ENCODE measurements at regions of chr19 and their contacts with region 1.

Region 1: GRCh38 chr19:36114763-36115452 is at the start of gene POLR2I:
- DNase-seq: peak; percentile 96 to 99
- ATAC-seq: peak; percentile 78 to 92 (median 84)
- H3K4me3 ChIP-seq: peak within 1 kb of the TSS; percentile 78
- H3K4me3 Mint-ChIP-seq: peak within 1 kb of the TSS; percentile 90
- H3K27ac ChIP-seq: peak within 1 kb of the TSS; percentile 93
- H3K27ac Mint-ChIP-seq: peak within 1 kb of the TSS; percentile 95 to 99
- H3K4me1 ChIP-seq: peaks cover 29% of the 10 kb centered on the region
- H3K4me1 Mint-ChIP-seq: peaks cover 33 to 53% of the 10 kb centered on the region in 2 donors
- H3K27me3 ChIP-seq: no peaks in the 10 kb centered on the region
- H3K27me3 Mint-ChIP-seq: no peaks in the 10 kb centered on the region
- CTCF ChIP-seq: no peak
- total RNA-seq, gene POLR2I: 26.6 to 33.4 (median 31.8) TPM

Region 2: GRCh38 chr19:35748106-35749020 is 366.5 kb before region 1 on chr19 and contains the start of gene LIN37:
- intact Hi-C with region 1: loop called (anchors 5 kb)
- DNase-seq: peak; percentile 97 to 99
- ATAC-seq: peak; percentile 73 to 90 (median 77)
- H3K4me3 ChIP-seq: peak within 1 kb of the TSS; percentile 91
- H3K4me3 Mint-ChIP-seq: peak within 1 kb of the TSS; percentile 97
- H3K27ac ChIP-seq: peak within 1 kb of the TSS; percentile 84
- H3K27ac Mint-ChIP-seq: peak within 1 kb of the TSS; percentile 92
- H3K4me1 ChIP-seq: peaks cover 46% of the 10 kb centered on the region
- H3K4me1 Mint-ChIP-seq: peaks cover 33 to 47% of the 10 kb centered on the region in 2 donors
- H3K27me3 ChIP-seq: no peaks in the 10 kb centered on the region
- H3K27me3 Mint-ChIP-seq: no peaks in the 10 kb centered on the region
- CTCF ChIP-seq: no peak
- total RNA-seq, gene LIN37: 16.7 to 22.1 (median 18.2) TPM

Region 3: GRCh38 chr19:35995048-35995993 is 119.6 kb before region 1 on chr19 and contains the start of gene SDHAF1:
- intact Hi-C with region 1: loop called (anchors 10 kb)
- DNase-seq: peak; percentile 88 to 95
- ATAC-seq: peak; percentile 89 to 94 (median 91)
- H3K4me3 ChIP-seq: peak within 1 kb of the TSS; percentile 59
- H3K4me3 Mint-ChIP-seq: peak within 1 kb of the TSS; percentile 96
- H3K27ac ChIP-seq: peak within 1 kb of the TSS; percentile 83
- H3K27ac Mint-ChIP-seq: peak within 1 kb of the TSS; percentile 91 to 95
- H3K4me1 ChIP-seq: peaks cover 26% of the 10 kb centered on the region
- H3K4me1 Mint-ChIP-seq: peaks cover 12 to 30% of the 10 kb centered on the region in 2 donors
- H3K27me3 ChIP-seq: no peaks in the 10 kb centered on the region
- H3K27me3 Mint-ChIP-seq: no peaks in the 10 kb centered on the region
- CTCF ChIP-seq: no peak
- total RNA-seq, gene SDHAF1: 9.2 to 12.1 (median 10.5) TPM

Region 4: DNA sequence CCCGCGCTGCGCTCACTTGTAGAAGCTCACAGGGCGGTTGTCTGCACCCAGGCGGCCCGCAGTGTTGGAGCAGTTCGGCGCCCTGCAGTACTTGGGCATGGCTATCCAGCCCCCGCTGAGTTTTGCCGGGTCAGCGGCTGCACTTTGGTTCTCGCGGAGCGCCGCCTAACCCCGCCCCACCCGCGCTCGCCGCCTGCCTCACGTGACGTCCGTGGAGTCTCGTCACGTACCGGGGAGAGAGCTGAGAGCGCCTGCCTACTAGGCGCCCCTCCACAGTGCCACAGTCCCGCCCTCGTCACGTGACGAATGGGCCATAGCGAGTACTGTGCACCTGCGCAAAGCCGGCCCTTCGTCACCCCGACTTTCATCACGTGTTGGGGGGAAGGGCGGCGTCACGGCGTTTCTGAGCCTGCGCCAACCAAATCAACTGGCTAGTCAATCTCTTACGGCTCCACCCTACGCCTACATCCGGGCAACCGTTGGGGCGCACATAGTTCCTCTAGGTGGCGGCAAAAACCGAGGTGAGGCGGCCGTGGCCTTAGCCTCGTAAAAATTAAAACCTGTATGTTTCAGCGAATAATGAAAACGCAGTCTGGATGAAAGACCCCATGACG is 60.7 kb before region 1 on chr19 and contains the start of gene THAP8:
- intact Hi-C with region 1: loop called (anchors 1 kb)
- DNase-seq: peak; percentile 99 to 100
- ATAC-seq: peak; percentile 83 to 94 (median 84)
- H3K4me3 ChIP-seq: peak within 1 kb of the TSS; percentile 85
- H3K4me3 Mint-ChIP-seq: peak within 1 kb of the TSS; percentile 98
- H3K27ac ChIP-seq: peak within 1 kb of the TSS; percentile 90
- H3K27ac Mint-ChIP-seq: peak within 1 kb of the TSS; percentile 93 to 94
- H3K4me1 ChIP-seq: peaks cover 18% of the 10 kb centered on the region
- H3K4me1 Mint-ChIP-seq: peaks cover 26 to 29% of the 10 kb centered on the region in 2 donors
- H3K27me3 ChIP-seq: no peaks in the 10 kb centered on the region
- H3K27me3 Mint-ChIP-seq: no peaks in the 10 kb centered on the region
- CTCF ChIP-seq: peak; percentile 66
- total RNA-seq, gene THAP8: 1.8 to 3.2 (median 2.8) TPM

Region 5: GRCh38 chr19:36132489-36132891 is 17.6 kb after region 1 on chr19:
- intact Hi-C with region 1: loop called (anchors 1 kb)
- DNase-seq: peak; percentile 33 to 47
- ATAC-seq: peak; percentile 38 to 65 (median 50)
- H3K4me3 ChIP-seq: no peak overlapping the region
- H3K4me3 Mint-ChIP-seq: peak overlapping the region; percentile 50
- H3K27ac ChIP-seq: peak overlapping the region; percentile 41
- H3K27ac Mint-ChIP-seq: peak overlapping the region; percentile 82 to 88
- H3K4me1 ChIP-seq: peaks cover 44% of the 10 kb centered on the region
- H3K4me1 Mint-ChIP-seq: peaks cover 26 to 43% of the 10 kb centered on the region in 2 donors
- H3K27me3 ChIP-seq: no peaks in the 10 kb centered on the region
- H3K27me3 Mint-ChIP-seq: no peaks in the 10 kb centered on the region
- CTCF ChIP-seq: no peak

Region 6: DNA sequence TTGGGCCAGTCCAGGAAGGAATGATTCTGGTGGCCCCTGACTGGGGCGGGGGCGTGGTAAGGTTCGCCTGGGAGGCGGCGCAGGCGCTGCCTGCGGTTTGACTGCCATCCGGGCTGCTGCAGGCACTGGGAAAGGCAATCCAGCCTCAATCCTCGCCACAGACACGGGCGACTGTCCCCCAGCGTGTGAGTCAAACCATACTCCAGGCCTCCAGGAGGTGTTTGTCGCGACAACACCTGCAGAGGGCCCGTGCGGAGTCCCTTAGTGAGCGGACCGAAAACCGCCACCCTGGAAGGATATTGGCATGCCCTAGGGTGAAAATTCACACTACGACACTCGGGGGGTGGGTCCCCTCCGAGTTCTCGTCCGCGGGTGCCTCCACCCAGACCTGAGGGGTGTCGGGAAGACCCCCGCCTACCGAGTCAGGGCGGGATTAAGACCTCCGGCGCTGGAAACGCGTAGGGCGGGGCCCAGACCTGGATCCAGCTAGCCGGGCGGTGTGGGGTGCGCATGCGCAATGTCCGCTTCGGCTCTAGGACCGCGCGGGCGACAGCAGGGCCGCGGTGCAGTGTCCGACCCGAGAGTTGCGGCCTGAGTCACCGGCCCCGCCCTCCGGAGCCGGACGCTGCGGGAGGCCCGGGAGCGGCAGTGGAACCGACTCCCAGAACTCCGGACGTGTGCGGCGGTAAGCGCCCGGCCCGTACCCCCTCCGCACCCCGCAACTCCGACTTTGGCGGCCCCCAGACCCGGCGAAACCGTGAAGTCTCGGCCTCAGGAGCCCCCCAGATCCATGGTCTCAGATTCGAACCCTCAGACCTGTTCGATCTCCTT is 24.8 kb after region 1 on chr19 and contains the start of gene CAPNS1:
- intact Hi-C with region 1: loop called (anchors 1 kb)
- DNase-seq: peak; percentile 91 to 96
- ATAC-seq: peak; percentile 68 to 88 (median 78)
- H3K4me3 ChIP-seq: peak within 1 kb of the TSS; percentile 94
- H3K4me3 Mint-ChIP-seq: peak within 1 kb of the TSS; percentile 96
- H3K27ac ChIP-seq: peak within 1 kb of the TSS; percentile 76
- H3K27ac Mint-ChIP-seq: peak within 1 kb of the TSS; percentile 88 to 90
- H3K4me1 ChIP-seq: peaks cover 19% of the 10 kb centered on the region
- H3K4me1 Mint-ChIP-seq: peaks cover 17 to 29% of the 10 kb centered on the region in 2 donors
- H3K27me3 ChIP-seq: no peaks in the 10 kb centered on the region
- H3K27me3 Mint-ChIP-seq: no peaks in the 10 kb centered on the region
- CTCF ChIP-seq: no peak
- total RNA-seq, gene CAPNS1: 569 to 637 (median 578) TPM

Region 7: DNA sequence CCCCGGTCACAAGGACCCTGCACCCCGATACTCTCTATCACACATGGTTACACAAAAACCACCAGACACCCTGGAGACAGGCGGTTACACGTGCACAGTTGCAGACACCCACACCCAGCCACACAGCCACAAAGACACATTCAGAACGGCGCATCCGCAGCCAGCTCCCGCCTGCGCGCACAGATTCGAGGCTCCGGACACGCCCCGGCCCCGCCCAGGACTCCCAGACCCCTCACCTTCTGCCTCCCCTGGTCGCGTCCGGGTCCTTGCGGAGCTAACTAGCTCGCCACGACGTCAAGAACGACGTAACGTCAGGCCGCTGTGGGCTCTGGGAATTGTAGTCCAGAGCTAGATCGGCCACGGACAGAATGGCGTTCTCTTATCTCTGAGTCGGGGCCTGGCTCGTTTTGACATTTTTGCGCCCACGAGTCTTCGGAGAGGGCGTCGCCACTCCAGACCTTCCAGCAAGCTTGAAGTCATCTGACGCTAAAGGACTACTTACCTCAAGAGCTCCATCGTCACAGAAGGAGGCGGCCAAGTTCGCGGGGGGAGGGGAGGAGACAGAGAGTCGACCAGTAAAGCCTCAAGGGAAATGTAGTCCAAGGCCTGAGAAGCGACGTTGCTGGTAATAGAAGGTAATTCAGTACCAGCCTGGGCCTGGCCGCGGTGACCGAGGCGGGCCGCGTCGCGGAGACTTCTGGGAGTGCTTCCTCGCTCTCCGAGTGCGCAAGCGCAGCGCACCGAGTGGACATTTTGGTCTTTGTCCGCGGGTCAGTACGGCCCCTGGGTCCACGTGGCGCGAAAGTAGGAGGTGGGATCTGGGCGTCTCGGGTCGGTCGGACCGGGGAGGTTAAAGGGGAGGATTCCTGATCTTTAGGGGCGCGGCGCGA is 99.7 kb after region 1 on chr19 and contains the starts of genes ZNF146 and ZNF565:
- intact Hi-C with region 1: loop called (anchors 1 kb)
- DNase-seq: peak; percentile 90 to 97
- ATAC-seq: peak; percentile 81 to 95 (median 86)
- H3K4me3 ChIP-seq: peak within 1 kb of the TSS; percentile 92
- H3K4me3 Mint-ChIP-seq: no peak within 1 kb of the TSS
- H3K27ac ChIP-seq: peak within 1 kb of the TSS; percentile 91
- H3K27ac Mint-ChIP-seq: no peak within 1 kb of the TSS
- H3K4me1 ChIP-seq: peaks cover 18% of the 10 kb centered on the region
- H3K4me1 Mint-ChIP-seq: peaks cover 12 to 14% of the 10 kb centered on the region in 2 donors
- H3K27me3 ChIP-seq: no peaks in the 10 kb centered on the region
- H3K27me3 Mint-ChIP-seq: no peaks in the 10 kb centered on the region
- CTCF ChIP-seq: no peak
- total RNA-seq, gene ZNF146: 20.3 to 37.3 (median 21.5) TPM
- total RNA-seq, gene ZNF565: 7.7 to 19.1 (median 10.5) TPM

Measured in natural killer cell (primary cell).